ENCODE measurements at regions of chrX and their contacts with region 1.

Region 1: GRCh38 chrX:68710870-68711576 is 63.6 kb downstream of the STARD8 start:
- DNase-seq: peak; percentile 65 to 73
- ATAC-seq: peak; percentile 91 to 94
- H3K4me3 ChIP-seq: no peak overlapping the region
- H3K27ac ChIP-seq: peak overlapping the region in 1 of 2 experiments; percentile 25; a peak in 1 of 6 replicates
- H3K4me1 ChIP-seq: no peaks in the 10 kb centered on the region
- CTCF ChIP-seq: peak; percentile 54
- EP300 ChIP-seq: no peak
- POLR2A ChIP-seq: no peak
- RAD21 ChIP-seq: peak; percentile 88

Region 2: GRCh38 chrX:68511255-68511654 is 199.8 kb before region 1 on chrX:
- CTCF ChIA-PET with region 1: interaction called, 31 read pairs
- POLR2A ChIA-PET with region 1: no interaction called
- DNase-seq: peak; percentile 7 to 52
- ATAC-seq: peak; percentile 66 to 76; a peak in 3 of 6 replicates
- H3K4me3 ChIP-seq: no peak overlapping the region
- H3K27ac ChIP-seq: no peak overlapping the region
- H3K4me1 ChIP-seq: peaks cover 7% of the 10 kb centered on the region; the same call in 1 of the 3 replicates
- CTCF ChIP-seq: peak; percentile 79
- EP300 ChIP-seq: no peak
- POLR2A ChIP-seq: no peak
- RAD21 ChIP-seq: peak; percentile 77 to 78

Region 3: DNA sequence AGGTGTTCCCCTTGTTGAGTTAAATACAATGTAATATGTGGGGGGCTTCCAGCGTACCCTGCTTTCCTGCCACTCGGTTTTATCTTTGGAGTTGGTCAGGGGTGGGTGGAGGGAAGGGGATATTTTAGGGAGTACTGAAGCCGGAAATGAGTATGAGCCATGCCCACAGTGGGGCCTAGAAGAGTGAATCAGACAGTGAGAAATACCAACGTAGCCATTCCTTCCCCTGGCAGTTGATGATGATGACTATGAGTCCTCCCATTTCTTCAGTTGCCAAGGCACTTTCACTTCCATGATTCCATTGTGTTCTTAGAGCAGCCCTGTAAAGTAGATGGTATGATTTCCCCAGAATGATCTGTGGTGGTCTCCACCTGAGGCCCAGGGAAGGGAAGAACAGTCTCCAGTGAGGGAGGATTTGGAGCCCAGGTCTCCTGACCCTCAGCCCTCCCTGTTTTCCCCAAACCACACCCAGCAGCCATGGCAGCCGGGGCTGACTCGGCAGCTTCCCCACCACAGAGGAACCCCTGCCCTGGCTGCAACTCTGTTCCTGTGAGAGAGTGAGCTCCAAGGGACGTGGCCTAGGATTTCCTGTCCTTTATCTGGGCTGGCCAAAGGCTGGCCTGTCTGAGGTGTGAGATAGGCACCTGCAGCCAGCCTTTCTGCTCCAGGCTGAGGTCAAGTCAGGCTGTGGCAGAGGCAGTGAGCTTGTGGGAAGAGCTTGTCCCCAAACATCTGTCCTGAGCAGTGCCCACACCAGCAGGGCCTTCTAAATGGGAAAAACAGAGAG is 10.9 kb before region 1 on chrX:
- CTCF ChIA-PET with region 1: interaction called, 24 read pairs
- POLR2A ChIA-PET with region 1: no interaction called
- DNase-seq: no peak
- ATAC-seq: no peak
- H3K4me3 ChIP-seq: no peak overlapping the region
- H3K27ac ChIP-seq: no peak overlapping the region
- H3K4me1 ChIP-seq: peaks cover 12% of the 10 kb centered on the region
- CTCF ChIP-seq: no peak
- EP300 ChIP-seq: no peak
- POLR2A ChIP-seq: no peak
- RAD21 ChIP-seq: no peak

Measured in A549 (cell line).